Esophagus squamous epithelium (tissue), 5 donors: ENCODE measurements at regions of chr9 and their contacts with region 1.

Region 1: DNA sequence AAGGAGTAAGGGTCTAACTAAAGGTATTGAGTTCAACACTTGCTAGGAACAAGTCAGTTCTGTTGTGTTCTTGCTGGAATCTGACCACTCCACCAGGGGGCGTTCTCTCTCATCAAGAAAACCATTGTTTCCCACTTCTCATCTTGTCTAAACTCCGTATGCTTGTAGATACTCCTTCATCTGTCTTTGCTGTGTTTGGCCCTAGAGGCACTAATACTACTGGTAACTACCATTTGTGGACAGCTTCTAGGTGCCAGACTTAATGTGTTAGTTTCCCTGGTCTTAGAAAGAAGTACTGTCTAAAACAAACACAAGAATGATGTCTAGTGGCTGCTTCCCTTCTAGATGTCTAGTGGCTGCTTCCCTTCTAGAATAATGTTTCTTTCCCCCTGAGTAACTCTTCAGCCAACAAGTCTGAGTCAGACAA is 18.7 kb upstream of the PTPDC1 start:
- DNase-seq: peak; percentile 5
- H3K4me3 ChIP-seq: no peak overlapping the region
- H3K27ac ChIP-seq: peak overlapping the region in 1 of 4 donors; percentile 16
- H3K4me1 ChIP-seq: peaks cover 0 to 5% (median 0%) of the 10 kb centered on the region in 3 donors
- H3K27me3 ChIP-seq: no peaks in the 10 kb centered on the region
- CTCF ChIP-seq: peak; percentile 82 to 89 (median 87)
- POLR2A ChIP-seq: no peak

Region 2: DNA sequence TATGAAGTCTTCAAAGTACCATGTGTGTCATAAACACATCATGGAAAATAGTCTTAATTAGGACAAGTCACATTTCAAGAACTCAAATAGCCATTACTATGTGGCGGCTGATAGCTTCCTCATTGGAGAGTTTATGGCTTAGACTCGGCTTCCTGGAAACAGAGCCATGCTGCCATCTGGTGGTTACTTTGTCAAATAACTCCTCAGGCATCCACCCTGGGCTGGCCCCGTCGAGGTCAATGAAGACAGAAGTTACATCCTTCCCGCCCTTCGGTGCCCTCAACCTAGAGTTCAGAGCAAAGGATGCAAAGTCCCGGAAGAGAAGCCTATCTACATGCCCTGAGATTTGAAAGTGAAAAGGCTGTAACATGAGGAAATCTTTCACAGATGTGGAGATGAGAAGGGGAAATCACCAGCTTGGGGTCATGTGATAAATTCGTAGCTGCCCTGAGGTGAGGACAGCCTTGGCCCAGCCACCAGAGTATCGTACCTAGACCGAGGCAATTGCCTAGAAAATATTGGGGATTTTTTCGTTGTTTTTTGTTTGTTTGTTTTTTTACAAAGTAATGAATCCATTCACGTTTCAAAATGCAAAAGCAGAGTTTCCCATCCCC is 148.1 kb after region 1 on chr9:
- intact Hi-C with region 1: loop called (anchors 2 kb)
- DNase-seq: peak; percentile 4
- H3K4me3 ChIP-seq: no peak overlapping the region
- H3K27ac ChIP-seq: no peak overlapping the region
- H3K4me1 ChIP-seq: peaks cover 3 to 7% (median 3%) of the 10 kb centered on the region in 3 donors
- H3K27me3 ChIP-seq: peaks cover 0 to 32% (median 0%) of the 10 kb centered on the region in 4 donors
- CTCF ChIP-seq: peak; percentile 63 to 90 (median 89)
- POLR2A ChIP-seq: no peak